ENCODE measurements at regions of chr7 and their contacts with region 1.

Region 1: GRCh38 chr7:154937837-154938236 is 65.1 kb downstream of the PAXIP1 start:
- DNase-seq: no peak
- ATAC-seq: no peak
- H3K4me3 Mint-ChIP-seq: no peak overlapping the region
- H3K27ac Mint-ChIP-seq: no peak overlapping the region
- H3K4me1 Mint-ChIP-seq: no peaks in the 10 kb centered on the region
- H3K27me3 Mint-ChIP-seq: no peaks in the 10 kb centered on the region

Region 2: DNA sequence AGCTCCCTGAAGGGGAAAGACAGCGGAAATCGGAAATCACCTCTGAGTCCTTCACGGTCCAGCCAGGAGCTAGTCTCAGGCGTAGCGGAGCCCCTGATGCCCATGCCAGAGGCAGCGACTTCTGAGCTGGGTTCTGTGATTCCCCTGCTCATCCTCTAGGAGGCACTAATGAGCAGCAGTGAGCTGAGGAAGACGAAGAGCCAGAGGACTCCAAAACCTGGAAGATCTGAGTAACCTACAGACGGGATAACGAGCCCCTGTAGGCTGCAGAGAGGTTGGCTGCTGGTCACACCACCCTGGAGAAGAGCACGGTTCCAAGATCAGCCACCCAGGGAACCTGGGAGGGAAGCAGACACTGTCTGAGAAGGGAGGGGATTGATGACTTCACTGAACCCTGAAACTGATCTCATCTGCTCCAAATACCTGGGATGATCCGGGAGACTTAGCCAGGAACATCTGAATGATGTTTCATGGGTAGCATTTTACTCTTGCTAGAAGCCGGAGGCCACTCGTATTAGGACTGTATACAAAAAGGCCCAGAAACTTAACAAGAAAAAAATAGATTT is 239.0 kb before region 1 on chr7:
- CTCF ChIA-PET with region 1: no interaction called
- POLR2A ChIA-PET with region 1: no interaction called
- DNase-seq: no peak
- ATAC-seq: no peak
- H3K4me3 Mint-ChIP-seq: no peak overlapping the region
- H3K27ac Mint-ChIP-seq: no peak overlapping the region
- H3K4me1 Mint-ChIP-seq: no peaks in the 10 kb centered on the region
- H3K27me3 Mint-ChIP-seq: no peaks in the 10 kb centered on the region

Region 3: DNA sequence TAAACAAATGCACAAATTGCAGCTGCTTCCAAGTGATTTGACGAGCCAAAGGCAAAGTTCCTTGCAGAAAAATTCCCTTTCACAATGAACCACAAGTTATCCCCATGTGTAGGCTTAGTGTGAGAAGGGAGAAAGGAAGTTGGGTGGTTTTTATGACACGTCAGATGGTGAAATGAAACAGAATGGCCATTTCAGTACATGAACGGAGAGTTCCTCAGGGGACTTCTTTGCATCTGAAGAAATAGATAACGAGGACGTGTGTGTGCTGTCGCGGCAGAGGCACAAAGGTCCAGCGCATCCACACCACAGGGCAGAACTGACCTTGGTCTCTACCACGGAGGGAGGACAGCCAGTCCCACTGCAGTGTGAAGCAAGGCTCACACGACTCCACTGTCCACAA is 70.8 kb before region 1 on chr7:
- CTCF ChIA-PET with region 1: no interaction called
- POLR2A ChIA-PET with region 1: no interaction called
- DNase-seq: no peak
- ATAC-seq: no peak
- H3K4me3 Mint-ChIP-seq: no peak overlapping the region
- H3K27ac Mint-ChIP-seq: no peak overlapping the region
- H3K4me1 Mint-ChIP-seq: no peaks in the 10 kb centered on the region
- H3K27me3 Mint-ChIP-seq: peaks cover 22% of the 10 kb centered on the region

Region 4: GRCh38 chr7:154913638-154914312 is 24.1 kb before region 1 on chr7:
- CTCF ChIA-PET with region 1: no interaction called
- POLR2A ChIA-PET with region 1: no interaction called
- DNase-seq: peak; percentile 88
- ATAC-seq: peak; percentile 99
- H3K4me3 Mint-ChIP-seq: peak overlapping the region; percentile 55
- H3K27ac Mint-ChIP-seq: no peak overlapping the region
- H3K4me1 Mint-ChIP-seq: peaks cover 4% of the 10 kb centered on the region
- H3K27me3 Mint-ChIP-seq: peaks cover 8% of the 10 kb centered on the region

Region 5: DNA sequence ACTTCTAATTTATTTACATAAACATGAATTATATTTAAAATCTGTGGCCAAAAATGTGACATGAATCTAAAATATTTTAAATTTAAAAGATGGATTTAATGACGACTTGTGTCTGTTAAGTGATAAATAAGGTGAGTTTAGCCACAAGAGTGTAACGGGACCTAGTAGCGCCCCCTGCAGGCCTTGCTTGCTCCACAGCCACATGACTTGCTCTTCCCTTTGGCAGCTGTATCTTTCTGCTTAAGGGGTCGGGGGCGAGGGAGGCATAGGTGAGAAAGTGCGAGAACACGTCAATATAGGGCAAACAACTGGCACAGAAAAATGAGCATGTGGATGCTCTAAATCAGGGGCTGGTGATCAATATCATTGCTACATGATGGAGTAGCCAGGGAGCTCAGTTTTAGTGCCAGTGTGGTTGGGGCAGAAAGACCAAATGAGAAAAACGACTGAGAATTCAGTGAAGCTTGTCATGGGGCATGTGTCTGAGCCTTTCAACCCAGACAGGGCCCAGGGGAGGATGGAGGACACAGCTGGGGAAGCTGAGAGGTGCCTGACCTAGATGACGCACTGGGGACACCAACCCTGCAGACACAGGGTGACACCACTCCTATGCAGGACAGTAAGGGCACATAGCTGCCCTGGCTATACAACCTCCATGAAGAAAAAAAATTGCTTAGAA is 15.3 kb after region 1 on chr7:
- CTCF ChIA-PET with region 1: interaction called, 14 read pairs
- POLR2A ChIA-PET with region 1: no interaction called
- DNase-seq: peak; percentile 67
- ATAC-seq: peak; percentile 47
- H3K4me3 Mint-ChIP-seq: no peak overlapping the region
- H3K27ac Mint-ChIP-seq: no peak overlapping the region
- H3K4me1 Mint-ChIP-seq: no peaks in the 10 kb centered on the region
- H3K27me3 Mint-ChIP-seq: no peaks in the 10 kb centered on the region

Region 6: DNA sequence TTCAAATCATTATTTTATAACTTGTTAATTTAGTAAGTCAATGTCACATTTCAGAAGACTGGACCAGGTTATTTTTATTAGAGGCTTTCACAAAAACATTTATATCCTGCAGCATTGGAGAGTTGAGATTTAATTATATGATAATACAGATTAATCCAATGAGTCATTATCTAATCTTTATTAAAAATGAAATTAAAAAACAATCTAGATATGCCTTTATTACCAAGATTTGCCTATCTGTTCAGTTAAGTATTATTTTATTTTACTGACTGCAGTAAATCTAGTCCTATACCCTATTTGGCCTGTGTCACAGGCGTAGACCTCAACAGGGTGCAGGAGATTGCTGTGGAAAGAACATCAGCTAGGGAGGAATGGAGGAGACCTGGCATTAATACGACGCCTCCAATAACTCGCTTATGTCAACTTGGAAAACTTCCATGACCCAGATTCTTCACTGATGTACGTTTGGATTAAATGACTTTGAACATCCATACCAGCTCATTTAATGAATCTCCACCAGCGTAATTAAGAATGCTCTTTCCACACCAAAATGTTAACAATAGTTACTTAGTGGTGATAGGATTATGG is 46.9 kb after region 1 on chr7:
- CTCF ChIA-PET with region 1: no interaction called
- POLR2A ChIA-PET with region 1: no interaction called
- DNase-seq: no peak
- ATAC-seq: no peak
- H3K4me3 Mint-ChIP-seq: no peak overlapping the region
- H3K27ac Mint-ChIP-seq: no peak overlapping the region
- H3K4me1 Mint-ChIP-seq: no peaks in the 10 kb centered on the region
- H3K27me3 Mint-ChIP-seq: no peaks in the 10 kb centered on the region